ENCODE measurements at regions of chr14 and their contacts with region 1.

Region 1: GRCh38 chr14:50060871-50061663 is 55.3 kb downstream of the VCPKMT start:
- H3K4me3 Mint-ChIP-seq: no peak overlapping the region
- H3K27ac Mint-ChIP-seq: peak overlapping the region; percentile 85
- H3K4me1 Mint-ChIP-seq: peaks cover 91% of the 10 kb centered on the region
- H3K27me3 Mint-ChIP-seq: no peaks in the 10 kb centered on the region

Region 2: DNA sequence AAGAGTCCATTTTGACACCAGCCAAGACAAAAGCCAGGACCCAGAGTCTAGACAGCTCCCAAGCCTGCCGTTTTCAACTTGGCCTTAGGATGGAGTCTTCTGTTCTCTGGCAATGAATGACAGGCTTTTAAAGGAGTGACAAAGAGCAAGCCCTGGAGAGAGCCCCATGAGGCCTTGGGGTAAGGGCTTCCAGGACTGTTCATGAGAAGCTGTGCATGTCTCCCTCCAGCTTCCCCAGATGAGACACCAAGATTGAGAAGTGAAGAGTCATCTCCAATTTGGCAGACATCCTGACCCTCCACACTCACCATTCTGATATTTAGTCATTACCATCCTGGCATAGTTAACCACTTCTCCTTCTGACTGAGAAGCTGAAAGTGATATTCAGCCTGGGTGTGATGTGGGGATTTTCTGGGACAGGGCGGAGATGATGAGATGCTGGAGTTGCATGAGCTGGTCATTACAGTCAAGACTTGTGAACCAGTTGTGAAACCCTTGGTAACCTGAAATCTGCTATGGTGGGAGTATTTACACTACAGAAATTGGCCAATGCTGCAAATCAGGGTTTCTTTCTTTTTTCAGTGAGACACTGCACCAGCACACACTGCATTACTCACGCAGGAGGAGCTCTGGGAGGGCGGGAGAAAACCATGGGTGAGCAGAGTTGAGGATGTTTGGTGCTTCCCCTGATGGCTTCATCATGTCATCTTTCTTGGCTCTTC is 22.5 kb before region 1 on chr14:
- intact Hi-C with region 1: loop called (anchors 2 kb)
- H3K4me3 Mint-ChIP-seq: peak overlapping the region; percentile 26
- H3K27ac Mint-ChIP-seq: peak overlapping the region; percentile 98
- H3K4me1 Mint-ChIP-seq: peaks cover 68% of the 10 kb centered on the region
- H3K27me3 Mint-ChIP-seq: no peaks in the 10 kb centered on the region

Region 3: GRCh38 chr14:50082784-50083466 is 21.9 kb after region 1 on chr14:
- intact Hi-C with region 1: loop called (anchors 2 kb)
- H3K4me3 Mint-ChIP-seq: no peak overlapping the region
- H3K27ac Mint-ChIP-seq: peak overlapping the region; percentile 83
- H3K4me1 Mint-ChIP-seq: peaks cover 54% of the 10 kb centered on the region
- H3K27me3 Mint-ChIP-seq: no peaks in the 10 kb centered on the region

Region 4: DNA sequence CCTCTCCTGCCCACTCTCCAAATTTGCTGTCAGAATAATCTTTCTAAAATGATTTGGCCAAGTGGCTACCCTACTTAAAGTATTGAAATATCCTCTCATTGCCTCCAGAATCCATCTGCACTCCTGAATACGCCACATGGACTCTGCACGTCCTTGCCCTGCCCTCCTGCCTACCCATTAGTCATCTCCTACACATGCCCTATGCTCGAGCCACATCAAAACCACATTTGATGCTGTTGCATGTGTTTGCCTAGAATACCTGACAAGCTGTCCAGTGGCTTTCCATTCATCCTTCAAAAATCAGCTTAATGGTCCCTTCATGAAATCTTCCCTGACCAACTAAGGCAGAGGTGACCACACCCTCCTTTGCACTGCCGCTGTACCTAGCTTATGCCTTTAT is 38.3 kb after region 1 on chr14:
- intact Hi-C with region 1: loop called (anchors 5 kb)
- H3K4me3 Mint-ChIP-seq: no peak overlapping the region
- H3K27ac Mint-ChIP-seq: no peak overlapping the region
- H3K4me1 Mint-ChIP-seq: peaks cover 22% of the 10 kb centered on the region
- H3K27me3 Mint-ChIP-seq: no peaks in the 10 kb centered on the region

Region 5: DNA sequence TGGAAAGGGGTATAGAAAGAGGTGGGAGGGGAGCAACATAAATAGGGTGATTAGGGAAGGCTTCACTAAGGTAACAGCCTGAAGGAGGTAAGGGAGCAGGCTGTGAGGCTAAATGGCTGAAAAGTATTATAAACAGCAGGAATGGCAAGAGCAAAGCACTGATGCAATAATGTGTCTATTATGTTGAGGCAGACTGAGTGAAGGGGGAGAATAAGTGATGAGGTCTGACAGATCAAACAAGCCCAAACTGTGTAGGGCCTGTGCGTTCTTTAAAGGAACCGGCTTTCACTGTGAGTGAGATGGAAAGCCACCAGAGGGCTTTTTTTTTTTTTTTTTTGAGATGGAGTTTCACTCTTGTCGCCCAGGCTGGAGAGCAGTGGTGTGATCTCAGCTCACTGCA is 62.0 kb after region 1 on chr14:
- intact Hi-C with region 1: no loop called
- H3K4me3 Mint-ChIP-seq: no peak overlapping the region
- H3K27ac Mint-ChIP-seq: no peak overlapping the region
- H3K4me1 Mint-ChIP-seq: no peaks in the 10 kb centered on the region
- H3K27me3 Mint-ChIP-seq: no peaks in the 10 kb centered on the region